Naive thymus-derived CD4-positive, alpha-beta T cell (primary cell): ENCODE measurements at regions of chr3 and their contacts with region 1.

Region 1: DNA sequence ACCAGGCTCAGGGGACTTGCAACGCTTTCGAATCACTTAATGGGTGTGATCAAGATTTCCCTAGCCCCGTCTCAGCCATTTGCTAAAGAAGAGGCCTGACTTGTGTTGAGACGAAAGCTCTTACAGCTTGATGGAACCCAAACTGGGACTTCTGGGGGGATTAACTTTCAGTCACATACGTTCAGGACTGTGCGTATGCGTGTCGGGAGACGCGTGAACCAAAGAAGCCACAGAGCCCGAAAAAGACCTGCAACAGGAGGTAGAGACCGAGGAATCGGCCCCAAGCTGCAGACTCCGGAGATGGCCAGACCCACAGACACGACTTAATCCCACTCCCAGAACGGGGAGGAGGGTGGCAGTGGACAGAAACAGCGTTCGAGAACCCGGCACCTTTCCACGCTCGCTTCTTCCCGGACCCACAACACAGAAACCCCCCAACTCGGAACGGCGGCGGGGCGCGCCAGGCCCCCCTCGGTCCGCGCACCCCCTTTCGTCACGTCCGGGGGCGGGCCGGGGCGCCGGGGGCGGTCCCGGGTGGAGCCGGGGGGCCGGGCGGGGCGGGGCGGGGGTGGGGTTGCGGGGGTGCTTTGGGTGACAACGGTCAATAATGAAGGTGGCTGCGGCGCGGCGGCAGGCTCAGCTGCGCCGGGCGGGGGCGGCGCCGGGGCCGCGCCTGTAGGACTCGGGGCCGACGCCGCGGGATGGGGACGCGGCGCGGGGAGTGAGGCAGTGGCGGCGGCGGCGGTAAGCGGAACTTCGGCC is at the start of gene ATP11B:
- DNase-seq: peak; percentile 72 to 90 (median 83)
- ATAC-seq: peak; percentile 92
- H3K4me3 ChIP-seq: peak within 1 kb of the TSS; percentile 98
- H3K4me3 Mint-ChIP-seq: peak within 1 kb of the TSS; percentile 97 to 100 (median 100)
- H3K27ac ChIP-seq: peak within 1 kb of the TSS; percentile 97
- H3K27ac Mint-ChIP-seq: peak within 1 kb of the TSS; percentile 96 to 100 (median 100)
- H3K4me1 ChIP-seq: peaks cover 21 to 22% of the 10 kb centered on the region in 2 donors
- H3K4me1 Mint-ChIP-seq: peaks cover 20 to 43% (median 28%) of the 10 kb centered on the region in 7 donors
- H3K27me3 ChIP-seq: no peaks in the 10 kb centered on the region
- H3K27me3 Mint-ChIP-seq: no peaks in the 10 kb centered on the region
- total RNA-seq, gene ATP11B: 111 to 136 (median 114) TPM

Region 2: DNA sequence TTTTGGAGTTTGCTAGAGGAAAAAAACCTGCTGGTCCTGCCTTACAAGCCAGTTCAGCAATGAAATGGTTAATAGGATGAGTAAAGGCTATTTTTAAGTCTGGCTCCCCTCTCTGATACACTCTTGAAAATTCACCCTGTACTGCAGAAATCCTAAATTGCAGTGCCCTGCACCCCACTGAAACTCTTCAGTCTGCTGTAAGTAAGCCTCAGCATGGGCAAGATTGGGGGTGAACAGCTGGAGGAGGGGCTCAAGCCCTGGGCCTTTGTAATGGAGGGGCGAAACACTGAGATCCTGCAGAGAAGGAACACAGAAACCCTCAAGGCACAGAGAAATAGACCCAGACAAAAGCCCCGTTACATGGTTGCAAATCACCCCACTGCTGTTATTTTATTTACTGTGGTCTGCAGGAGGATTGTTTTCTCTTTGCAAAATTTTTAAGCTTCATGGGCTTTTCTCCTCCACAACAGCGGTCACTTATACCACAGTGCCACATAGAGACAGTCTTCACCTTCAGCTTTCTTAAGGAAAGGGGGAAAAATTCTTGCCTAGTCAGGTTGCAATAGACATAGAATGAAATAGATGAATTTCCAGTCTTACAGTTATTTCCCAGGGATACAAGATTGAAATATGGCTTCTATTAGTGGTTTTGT is 1036.3 kb before region 1 on chr3:
- CTCF ChIA-PET with region 1: no interaction called
- POLR2A ChIA-PET with region 1: no interaction called
- intact Hi-C with region 1: no loop called
- DNase-seq: no peak
- ATAC-seq: no peak
- H3K4me3 ChIP-seq: no peak overlapping the region
- H3K4me3 Mint-ChIP-seq: no peak overlapping the region
- H3K27ac ChIP-seq: no peak overlapping the region
- H3K27ac Mint-ChIP-seq: no peak overlapping the region
- H3K4me1 ChIP-seq: no peaks in the 10 kb centered on the region
- H3K4me1 Mint-ChIP-seq: no peaks in the 10 kb centered on the region
- H3K27me3 ChIP-seq: no peaks in the 10 kb centered on the region
- H3K27me3 Mint-ChIP-seq: peaks cover 4 to 18% (median 10%) of the 10 kb centered on the region in 5 donors

Region 3: GRCh38 chr3:182533394-182533793 is 259.7 kb before region 1 on chr3:
- CTCF ChIA-PET with region 1: no interaction called
- POLR2A ChIA-PET with region 1: no interaction called
- intact Hi-C with region 1: no loop called
- DNase-seq: no peak
- ATAC-seq: no peak
- H3K4me3 ChIP-seq: no peak overlapping the region
- H3K4me3 Mint-ChIP-seq: no peak overlapping the region
- H3K27ac ChIP-seq: no peak overlapping the region
- H3K27ac Mint-ChIP-seq: no peak overlapping the region
- H3K4me1 ChIP-seq: no peaks in the 10 kb centered on the region
- H3K4me1 Mint-ChIP-seq: no peaks in the 10 kb centered on the region
- H3K27me3 ChIP-seq: no peaks in the 10 kb centered on the region
- H3K27me3 Mint-ChIP-seq: peaks cover 0 to 18% (median under 1%) of the 10 kb centered on the region in 5 donors

Region 4: DNA sequence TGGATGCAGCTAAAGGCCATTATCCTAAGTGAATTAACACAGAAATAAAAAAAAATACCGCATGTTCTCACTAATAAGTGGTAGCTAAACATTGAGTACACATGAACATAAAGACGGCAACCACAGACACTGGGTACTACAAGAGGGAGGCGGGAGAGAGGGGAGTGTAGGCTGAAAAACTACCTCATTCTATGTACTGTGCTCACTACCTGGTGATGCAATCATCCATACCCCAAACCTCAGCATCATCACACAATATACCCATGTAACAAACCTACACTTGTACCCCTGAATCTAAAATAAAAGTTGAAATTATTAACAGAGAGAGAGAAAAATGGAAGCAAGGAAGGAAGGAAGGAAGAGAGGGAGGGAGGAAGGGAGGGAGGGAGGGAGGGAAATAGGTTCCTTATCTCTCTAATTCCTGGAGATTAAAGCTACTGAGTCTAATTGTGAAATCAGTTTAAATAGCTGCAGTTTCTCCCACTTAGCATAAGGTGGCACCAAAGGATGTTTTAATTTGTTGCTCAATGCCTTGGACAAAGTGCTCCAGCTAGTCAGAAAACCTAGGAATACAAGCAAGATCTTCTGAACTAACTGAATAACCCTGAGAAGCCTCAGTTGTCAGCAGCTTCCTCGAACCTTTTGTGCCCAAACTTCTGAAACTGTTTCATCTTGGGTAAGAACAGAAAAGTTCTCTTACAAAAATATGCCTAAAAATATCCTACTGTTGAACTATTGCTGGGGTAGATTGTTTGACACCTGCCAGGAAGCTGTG is 79.2 kb before region 1 on chr3:
- CTCF ChIA-PET with region 1: interaction called, 4 read pairs
- POLR2A ChIA-PET with region 1: interaction called, 7 read pairs
- intact Hi-C with region 1: loop called (anchors 1 to 2 kb)
- DNase-seq: peak in 6 of 9 donors; percentile 11 to 51 (median 33)
- ATAC-seq: peak; percentile 66
- H3K4me3 ChIP-seq: no peak overlapping the region
- H3K4me3 Mint-ChIP-seq: no peak overlapping the region
- H3K27ac ChIP-seq: no peak overlapping the region
- H3K27ac Mint-ChIP-seq: no peak overlapping the region
- H3K4me1 ChIP-seq: no peaks in the 10 kb centered on the region
- H3K4me1 Mint-ChIP-seq: peaks cover 4 to 16% (median 7%) of the 10 kb centered on the region in 7 donors
- H3K27me3 ChIP-seq: no peaks in the 10 kb centered on the region
- H3K27me3 Mint-ChIP-seq: peaks cover 0 to 2% (median 0%) of the 10 kb centered on the region in 5 donors

Region 5: DNA sequence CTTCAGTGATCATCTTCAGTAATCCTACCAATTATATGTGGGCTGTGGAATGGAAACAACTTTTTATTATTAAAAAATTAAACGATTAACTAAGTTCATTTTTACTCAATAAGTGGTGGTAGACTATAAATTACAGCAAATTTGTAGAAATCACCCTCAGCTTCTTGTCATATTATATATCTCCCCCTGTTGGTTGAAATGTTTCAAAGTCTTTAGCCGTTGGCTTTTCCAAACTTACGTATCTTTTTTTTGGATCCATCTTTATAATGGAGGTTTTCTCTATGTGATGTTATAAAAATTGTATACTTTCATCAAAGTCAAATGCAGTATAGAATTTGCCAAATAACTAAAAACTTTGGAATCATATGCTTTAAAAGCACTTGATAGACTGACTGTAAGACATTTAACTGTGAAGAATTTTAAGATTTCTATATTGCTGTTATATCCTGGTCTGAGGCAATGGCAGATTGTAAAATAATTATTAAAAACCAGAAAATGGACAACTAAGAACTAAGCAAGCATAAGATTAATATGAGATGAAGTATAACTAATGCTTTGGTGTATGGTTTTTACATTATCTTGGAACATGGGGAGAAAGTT is 44.9 kb after region 1 on chr3:
- CTCF ChIA-PET with region 1: interaction called, 5 read pairs
- POLR2A ChIA-PET with region 1: interaction called, 5 read pairs
- intact Hi-C with region 1: loop called (anchors 1 to 2 kb)
- DNase-seq: peak in 6 of 9 donors; percentile 5 to 52 (median 34)
- ATAC-seq: peak; percentile 53
- H3K4me3 ChIP-seq: no peak overlapping the region
- H3K4me3 Mint-ChIP-seq: no peak overlapping the region
- H3K27ac ChIP-seq: no peak overlapping the region
- H3K27ac Mint-ChIP-seq: no peak overlapping the region
- H3K4me1 ChIP-seq: no peaks in the 10 kb centered on the region
- H3K4me1 Mint-ChIP-seq: peaks cover 3 to 20% (median 4%) of the 10 kb centered on the region in 7 donors
- H3K27me3 ChIP-seq: no peaks in the 10 kb centered on the region
- H3K27me3 Mint-ChIP-seq: no peaks in the 10 kb centered on the region

Region 6: DNA sequence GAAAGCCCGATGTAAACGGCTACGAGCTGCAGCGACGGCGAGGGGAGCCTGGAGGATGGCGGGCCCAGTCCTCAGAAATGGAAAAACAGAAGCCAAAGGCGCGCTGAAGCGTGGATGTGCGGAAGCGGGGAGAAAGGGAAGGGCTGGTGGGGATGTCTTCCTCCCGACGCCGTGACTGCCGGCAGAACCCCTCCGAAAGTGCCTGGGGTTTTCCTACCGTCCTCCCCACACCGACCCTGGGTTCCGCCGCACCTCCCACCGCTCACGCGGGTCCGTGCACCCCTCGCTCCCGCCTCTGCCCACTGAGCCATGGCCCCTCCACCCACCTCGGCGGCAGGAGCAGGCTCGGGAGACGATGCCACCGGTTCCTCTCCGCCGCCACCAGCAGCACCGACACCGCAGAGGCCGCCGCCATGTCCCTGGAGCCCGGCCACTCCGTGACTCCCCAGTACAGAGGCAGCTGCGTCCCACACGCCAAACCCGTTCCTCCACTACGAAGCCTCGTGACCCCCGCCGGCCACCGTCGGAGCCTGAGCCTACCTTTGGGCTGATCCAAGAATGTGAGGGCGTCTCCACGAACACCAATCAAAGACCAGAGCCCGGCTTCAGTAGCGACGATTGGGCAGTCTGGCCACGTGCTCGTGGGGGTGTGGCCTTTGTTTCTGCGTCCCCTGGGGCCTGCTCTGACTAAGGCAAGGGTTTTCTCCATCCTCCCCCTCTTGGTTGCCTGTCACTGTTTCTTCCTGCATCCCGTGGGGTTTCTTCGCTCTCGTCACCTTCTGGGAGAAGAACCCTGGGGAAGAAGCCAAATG is 306.1 kb after region 1 on chr3 and contains the start of gene MCCC1:
- CTCF ChIA-PET with region 1: interaction called, 4 read pairs
- POLR2A ChIA-PET with region 1: interaction called, 5 read pairs
- intact Hi-C with region 1: loop called (anchors 1 kb)
- DNase-seq: peak; percentile 82 to 98 (median 97)
- ATAC-seq: peak; percentile 99
- H3K4me3 ChIP-seq: peak within 1 kb of the TSS; percentile 73
- H3K4me3 Mint-ChIP-seq: peak within 1 kb of the TSS; percentile 87 to 98 (median 97)
- H3K27ac ChIP-seq: peak within 1 kb of the TSS; percentile 83
- H3K27ac Mint-ChIP-seq: peak within 1 kb of the TSS; percentile 90 to 99 (median 97)
- H3K4me1 ChIP-seq: peaks cover 7 to 10% of the 10 kb centered on the region in 2 donors
- H3K4me1 Mint-ChIP-seq: peaks cover 18 to 52% (median 43%) of the 10 kb centered on the region in 7 donors
- H3K27me3 ChIP-seq: no peaks in the 10 kb centered on the region
- H3K27me3 Mint-ChIP-seq: no peaks in the 10 kb centered on the region
- total RNA-seq, gene MCCC1: 17.7 to 37.5 (median 31.8) TPM

Region 7: DNA sequence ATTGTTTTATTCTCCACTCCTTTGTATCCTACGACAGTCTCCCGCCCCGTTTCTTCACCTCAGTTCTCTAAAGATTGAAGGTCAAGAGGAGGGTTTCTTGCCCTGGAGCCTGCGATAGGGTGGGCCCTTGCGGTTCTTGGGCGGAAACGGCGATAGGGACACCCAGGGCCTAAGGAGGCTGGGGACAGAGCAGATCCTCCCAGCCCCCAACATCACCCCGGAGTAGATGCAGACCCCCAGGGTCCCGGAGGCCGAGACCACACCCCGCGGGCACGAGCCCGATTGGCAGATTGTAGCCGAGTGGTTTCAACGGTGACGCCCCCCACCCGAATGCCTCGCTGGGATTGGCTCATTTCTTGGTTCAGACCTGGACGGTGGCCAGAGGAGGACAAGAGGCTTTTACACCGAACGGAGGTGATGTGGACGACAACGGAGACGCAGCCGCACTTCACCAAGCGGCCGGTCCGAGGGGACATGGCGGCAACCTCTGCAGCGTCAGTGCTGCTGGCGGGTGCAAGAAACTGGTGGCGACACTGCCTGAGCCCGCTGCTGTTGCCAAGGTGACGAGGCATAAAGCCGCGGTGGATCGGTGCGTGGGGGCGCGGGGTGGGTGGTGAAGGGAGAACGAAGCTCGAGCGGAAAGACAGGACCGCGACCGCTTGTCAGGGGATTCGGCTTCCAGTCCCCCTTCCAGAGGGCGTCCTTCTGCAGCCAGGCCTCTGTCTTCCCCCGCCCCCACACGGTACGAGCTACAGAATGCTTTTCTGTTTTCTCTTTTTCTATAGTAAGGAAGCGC is 654.3 kb after region 1 on chr3:
- CTCF ChIA-PET with region 1: no interaction called
- POLR2A ChIA-PET with region 1: interaction called, 13 read pairs
- intact Hi-C with region 1: no loop called
- DNase-seq: peak; percentile 39 to 74 (median 51)
- ATAC-seq: peak; percentile 87
- H3K4me3 ChIP-seq: peak overlapping the region; percentile 80
- H3K4me3 Mint-ChIP-seq: peak overlapping the region; percentile 88 to 99 (median 93)
- H3K27ac ChIP-seq: peak overlapping the region; percentile 47
- H3K27ac Mint-ChIP-seq: peak overlapping the region; percentile 60 to 93 (median 81)
- H3K4me1 ChIP-seq: peaks cover 5 to 12% of the 10 kb centered on the region in 2 donors
- H3K4me1 Mint-ChIP-seq: peaks cover 13 to 26% (median 17%) of the 10 kb centered on the region in 7 donors
- H3K27me3 ChIP-seq: no peaks in the 10 kb centered on the region
- H3K27me3 Mint-ChIP-seq: peaks cover 0 to 20% (median 0%) of the 10 kb centered on the region in 5 donors